B cell (primary cell): ENCODE measurements at regions of chr11 and their contacts with region 1.

Region 1: GRCh38 chr11:47578524-47579460 is at the starts of genes KBTBD4 and NDUFS3:
- DNase-seq: peak; percentile 94
- ATAC-seq: peak; percentile 95
- H3K4me3 ChIP-seq: peak within 1 kb of the TSS; percentile 61 to 91 (median 87)
- H3K4me3 Mint-ChIP-seq: peak within 1 kb of the TSS; percentile 96
- H3K27ac ChIP-seq: peak within 1 kb of the TSS; percentile 78 to 81
- H3K27ac Mint-ChIP-seq: peak within 1 kb of the TSS; percentile 98
- H3K4me1 ChIP-seq: peaks cover 25 to 26% of the 10 kb centered on the region in 2 donors
- H3K4me1 Mint-ChIP-seq: peaks cover 32% of the 10 kb centered on the region
- H3K27me3 ChIP-seq: no peaks in the 10 kb centered on the region
- H3K27me3 Mint-ChIP-seq: no peaks in the 10 kb centered on the region
- CTCF ChIP-seq: no peak
- total RNA-seq, gene KBTBD4: 20.3 and 20.7 TPM in 2 replicates
- total RNA-seq, gene NDUFS3: 76.2 and 79.5 TPM in 2 replicates

Region 2: GRCh38 chr11:47248664-47249377 is 330.0 kb before region 1 on chr11 and contains the start of gene ACP2:
- CTCF ChIA-PET with region 1: no interaction called
- POLR2A ChIA-PET with region 1: no interaction called
- intact Hi-C with region 1: loop called (anchors 1 kb)
- DNase-seq: peak; percentile 94
- ATAC-seq: peak; percentile 94
- H3K4me3 ChIP-seq: peak within 1 kb of the TSS; percentile 65 to 99 (median 90)
- H3K4me3 Mint-ChIP-seq: peak within 1 kb of the TSS; percentile 99
- H3K27ac ChIP-seq: peak within 1 kb of the TSS; percentile 56 to 79
- H3K27ac Mint-ChIP-seq: peak within 1 kb of the TSS; percentile 99
- H3K4me1 ChIP-seq: peaks cover 13 to 22% of the 10 kb centered on the region in 2 donors
- H3K4me1 Mint-ChIP-seq: peaks cover 24% of the 10 kb centered on the region
- H3K27me3 ChIP-seq: no peaks in the 10 kb centered on the region
- H3K27me3 Mint-ChIP-seq: no peaks in the 10 kb centered on the region
- CTCF ChIP-seq: no peak
- total RNA-seq, gene ACP2: 23.5 and 29.5 TPM in 2 replicates

Region 3: GRCh38 chr11:47541070-47541469 is 37.7 kb before region 1 on chr11:
- CTCF ChIA-PET with region 1: no interaction called
- POLR2A ChIA-PET with region 1: interaction called, 12 read pairs
- intact Hi-C with region 1: no loop called
- DNase-seq: no peak
- ATAC-seq: no peak
- H3K4me3 ChIP-seq: no peak overlapping the region
- H3K4me3 Mint-ChIP-seq: peak overlapping the region; percentile 0
- H3K27ac ChIP-seq: peak overlapping the region in 1 of 2 donors; percentile 3
- H3K27ac Mint-ChIP-seq: no peak overlapping the region
- H3K4me1 ChIP-seq: peaks cover 18 to 32% of the 10 kb centered on the region in 2 donors
- H3K4me1 Mint-ChIP-seq: peaks cover 52% of the 10 kb centered on the region
- H3K27me3 ChIP-seq: no peaks in the 10 kb centered on the region
- H3K27me3 Mint-ChIP-seq: no peaks in the 10 kb centered on the region
- CTCF ChIP-seq: no peak

Region 4: DNA sequence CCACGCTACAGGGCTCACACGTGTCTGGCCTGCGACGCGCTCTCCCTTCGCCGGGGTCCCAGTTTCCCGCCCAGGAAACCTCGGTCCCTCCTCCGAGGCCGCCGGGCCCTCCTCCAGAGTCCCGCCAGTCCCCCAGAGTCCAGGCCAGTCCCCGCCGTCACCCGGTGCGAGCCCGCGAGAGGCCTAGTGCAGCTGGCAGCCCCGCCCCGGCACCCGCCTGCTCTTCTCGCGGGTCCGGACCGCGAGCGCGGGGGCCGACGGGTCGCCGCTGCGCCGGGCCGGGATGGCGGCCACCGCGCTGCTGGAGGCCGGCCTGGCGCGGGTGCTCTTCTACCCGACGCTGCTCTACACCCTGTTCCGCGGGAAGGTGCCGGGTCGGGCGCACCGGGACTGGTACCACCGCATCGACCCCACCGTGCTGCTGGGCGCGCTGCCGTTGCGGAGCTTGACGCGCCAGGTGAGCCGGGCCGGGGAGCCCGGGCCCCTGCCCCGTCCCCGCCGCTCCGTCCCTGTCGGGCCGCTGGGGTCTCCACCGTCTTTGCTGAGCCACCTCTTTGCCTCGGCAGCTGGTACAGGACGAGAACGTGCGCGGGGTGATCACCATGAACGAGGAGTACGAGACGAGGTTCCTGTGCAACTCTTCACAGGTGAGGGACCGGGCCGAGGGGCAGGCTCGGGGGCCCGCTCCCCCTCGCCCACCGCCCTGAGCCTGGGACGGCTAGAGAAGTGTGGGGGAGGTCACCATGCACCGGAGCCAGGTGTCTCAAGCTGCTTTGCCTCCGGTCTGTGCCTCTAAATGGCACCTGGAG is 13.2 kb before region 1 on chr11 and contains the start of gene PTPMT1:
- CTCF ChIA-PET with region 1: interaction called, 7 read pairs
- POLR2A ChIA-PET with region 1: interaction called, 18 read pairs
- intact Hi-C with region 1: loop called (anchors 2 kb)
- DNase-seq: peak; percentile 77
- ATAC-seq: peak; percentile 94
- H3K4me3 ChIP-seq: peak within 1 kb of the TSS; percentile 59 to 90 (median 83)
- H3K4me3 Mint-ChIP-seq: peak within 1 kb of the TSS; percentile 85
- H3K27ac ChIP-seq: peak within 1 kb of the TSS; percentile 81 to 89
- H3K27ac Mint-ChIP-seq: peak within 1 kb of the TSS; percentile 87
- H3K4me1 ChIP-seq: peaks cover 8 to 17% of the 10 kb centered on the region in 2 donors
- H3K4me1 Mint-ChIP-seq: peaks cover 20% of the 10 kb centered on the region
- H3K27me3 ChIP-seq: no peaks in the 10 kb centered on the region
- H3K27me3 Mint-ChIP-seq: no peaks in the 10 kb centered on the region
- CTCF ChIP-seq: no peak
- total RNA-seq, gene PTPMT1: 20.8 and 26.2 TPM in 2 replicates

Region 5: GRCh38 chr11:47715082-47715669 is 136.4 kb after region 1 on chr11 and contains the start of gene AGBL2:
- CTCF ChIA-PET with region 1: interaction called, 3 read pairs
- POLR2A ChIA-PET with region 1: no interaction called
- intact Hi-C with region 1: loop called (anchors 1 kb)
- DNase-seq: peak; percentile 88
- ATAC-seq: peak; percentile 99
- H3K4me3 ChIP-seq: peak within 1 kb of the TSS; percentile 81 to 95 (median 94)
- H3K4me3 Mint-ChIP-seq: peak within 1 kb of the TSS; percentile 97
- H3K27ac ChIP-seq: peak within 1 kb of the TSS; percentile 84 to 97
- H3K27ac Mint-ChIP-seq: peak within 1 kb of the TSS; percentile 97
- H3K4me1 ChIP-seq: peaks cover 11 to 15% of the 10 kb centered on the region in 2 donors
- H3K4me1 Mint-ChIP-seq: peaks cover 14% of the 10 kb centered on the region
- H3K27me3 ChIP-seq: no peaks in the 10 kb centered on the region
- H3K27me3 Mint-ChIP-seq: no peaks in the 10 kb centered on the region
- CTCF ChIP-seq: no peak
- total RNA-seq, gene AGBL2: 13.6 and 17.0 TPM in 2 replicates